ENCODE measurements at regions of chr17 and their contacts with region 1.

Region 1: DNA sequence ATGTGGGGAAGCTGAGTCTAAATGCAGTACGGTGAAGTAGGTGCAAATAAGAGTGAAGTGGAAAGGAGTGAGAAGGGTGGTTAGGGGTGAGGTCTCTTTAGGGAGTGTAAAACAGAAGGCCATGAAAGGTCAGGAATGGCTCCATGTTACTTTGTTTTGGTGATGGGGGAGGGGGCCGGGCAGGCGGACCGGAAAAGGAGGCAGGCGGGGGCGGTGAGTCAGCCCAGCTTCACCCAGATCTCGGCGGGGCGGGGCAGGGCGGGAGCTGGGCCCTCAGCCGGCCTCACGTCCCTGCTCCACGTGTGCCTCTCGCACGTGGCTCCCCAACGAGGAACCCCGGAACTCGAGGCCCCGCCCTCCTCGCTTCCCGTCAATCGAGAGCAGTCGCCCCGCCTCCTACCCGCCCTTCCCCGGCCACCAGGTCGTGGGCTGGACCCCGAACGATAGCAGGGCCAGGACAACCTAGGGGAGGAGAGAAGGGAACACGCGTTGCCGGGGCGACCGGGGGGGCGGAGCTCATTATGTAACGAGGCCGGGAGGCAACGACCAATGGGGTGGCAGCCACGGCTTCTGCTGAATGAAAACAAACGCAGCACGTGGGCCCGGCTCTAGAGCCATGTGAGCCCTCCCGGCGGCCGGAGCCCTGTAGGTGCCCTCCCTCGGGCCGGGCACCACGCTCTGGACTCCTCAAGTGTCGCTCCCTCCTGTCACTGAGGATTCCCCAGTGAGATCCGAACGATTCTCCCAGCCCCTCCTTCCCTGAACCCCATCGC is 1.4 kb downstream of the NR1D1 start:
- DNase-seq: peak; percentile 99
- ATAC-seq: peak; percentile 79
- H3K4me3 Mint-ChIP-seq: peak overlapping the region; percentile 79
- H3K27ac Mint-ChIP-seq: peak overlapping the region; percentile 44
- H3K4me1 Mint-ChIP-seq: peaks cover 51% of the 10 kb centered on the region
- H3K27me3 Mint-ChIP-seq: peaks cover 47% of the 10 kb centered on the region
- CTCF ChIP-seq: no peak

Region 2: GRCh38 chr17:40062329-40063186 is 36.5 kb before region 1 on chr17 and contains the start of gene THRA:
- CTCF ChIA-PET with region 1: interaction called, 14 read pairs
- POLR2A ChIA-PET with region 1: interaction called, 3 read pairs
- DNase-seq: peak; percentile 53
- ATAC-seq: peak; percentile 64
- H3K4me3 Mint-ChIP-seq: peak within 1 kb of the TSS; percentile 86
- H3K27ac Mint-ChIP-seq: no peak within 1 kb of the TSS
- H3K4me1 Mint-ChIP-seq: peaks cover 62% of the 10 kb centered on the region
- H3K27me3 Mint-ChIP-seq: peaks cover 32% of the 10 kb centered on the region
- CTCF ChIP-seq: no peak
- total RNA-seq, gene THRA: 11.9 to 15.9 TPM (median 12.0 TPM) in 3 replicates